Endothelial cell of umbilical vein (primary cell): ENCODE measurements at regions of chr20 and their contacts with region 1.

Region 1: DNA sequence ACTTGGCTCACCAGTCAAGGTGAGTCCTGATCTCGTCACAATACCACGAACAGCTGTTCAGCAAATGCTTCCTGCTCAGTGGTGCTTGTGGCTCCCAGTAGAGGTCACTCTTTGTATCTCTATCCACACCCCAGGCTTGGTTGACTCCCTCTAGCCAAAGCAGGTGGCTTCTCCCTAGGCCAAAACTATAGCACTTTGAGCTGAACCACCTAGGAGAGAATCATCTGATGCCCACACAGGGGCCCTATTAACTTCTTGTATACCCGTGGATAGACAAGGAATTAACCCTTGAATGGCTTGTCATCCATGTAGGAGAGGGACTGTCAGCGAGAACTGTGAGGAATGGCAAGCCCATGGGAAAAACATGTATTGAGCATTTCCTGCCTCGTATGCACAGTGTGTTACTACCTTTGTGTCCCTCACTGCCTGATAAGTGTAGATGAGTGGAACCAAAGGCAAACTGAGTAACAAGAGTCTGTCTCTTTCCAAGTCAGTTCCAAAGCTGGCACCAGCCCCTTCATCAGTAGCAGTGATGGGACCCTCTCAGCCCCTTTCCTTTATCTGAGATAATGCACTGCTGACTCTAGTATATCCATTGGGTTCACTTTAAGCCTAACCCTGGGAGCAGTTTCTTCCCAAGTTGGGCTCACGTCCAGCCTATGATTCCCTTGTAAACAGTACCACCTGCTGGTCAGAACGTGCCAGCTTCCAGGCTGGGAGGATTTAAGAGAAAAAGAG is 42.5 kb downstream of the EIF2S2 start:
- DNase-seq: peak; percentile 90
- H3K4me3 ChIP-seq: no peak overlapping the region
- H3K27ac ChIP-seq: no peak overlapping the region
- H3K4me1 ChIP-seq: no peaks in the 10 kb centered on the region
- H3K27me3 ChIP-seq: no peaks in the 10 kb centered on the region
- CTCF ChIP-seq: peak; percentile 64 to 93
- POLR2A ChIP-seq: no peak

Region 2: DNA sequence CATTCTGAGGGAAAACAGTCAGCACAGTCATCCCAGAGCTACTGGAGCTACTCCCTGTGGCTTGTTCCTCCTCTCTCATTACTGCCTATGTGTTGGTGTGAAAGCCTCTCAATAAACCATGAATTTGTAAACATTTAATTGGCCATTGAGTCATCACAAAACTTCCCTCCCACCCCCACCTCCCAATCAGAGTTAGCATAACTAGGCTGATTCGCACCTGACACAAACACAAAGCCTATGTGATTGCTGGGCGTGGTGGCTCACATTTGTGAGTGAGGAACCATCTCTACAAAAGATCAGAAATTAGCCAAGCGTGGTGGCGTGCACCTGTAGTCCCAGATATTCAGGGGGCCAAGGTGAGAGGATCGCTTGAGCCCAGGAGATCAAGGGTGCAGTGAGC is 608.8 kb before region 1 on chr20:
- CTCF ChIA-PET with region 1: no interaction called
- POLR2A ChIA-PET with region 1: no interaction called
- dilution Hi-C with region 1: no loop called
- intact Hi-C with region 1: loop called (anchors 5 kb)
- DNase-seq: no peak
- H3K4me3 ChIP-seq: no peak overlapping the region
- H3K27ac ChIP-seq: no peak overlapping the region
- H3K4me1 ChIP-seq: no peaks in the 10 kb centered on the region
- H3K27me3 ChIP-seq: no peaks in the 10 kb centered on the region
- CTCF ChIP-seq: no peak
- POLR2A ChIP-seq: no peak

Region 3: GRCh38 chr20:33947709-33948295 is 121.7 kb before region 1 on chr20:
- CTCF ChIA-PET with region 1: no interaction called
- POLR2A ChIA-PET with region 1: no interaction called
- dilution Hi-C with region 1: no loop called
- intact Hi-C with region 1: loop called (anchors 5 kb)
- DNase-seq: peak; percentile 24
- H3K4me3 ChIP-seq: no peak overlapping the region
- H3K27ac ChIP-seq: no peak overlapping the region
- H3K4me1 ChIP-seq: no peaks in the 10 kb centered on the region
- H3K27me3 ChIP-seq: peaks cover 2% of the 10 kb centered on the region in 2 experiments
- CTCF ChIP-seq: peak; percentile 52 to 70
- POLR2A ChIP-seq: no peak

Region 4: GRCh38 chr20:34129518-34130162 is 60.1 kb after region 1 on chr20:
- CTCF ChIA-PET with region 1: interaction called, 3 read pairs
- POLR2A ChIA-PET with region 1: no interaction called
- dilution Hi-C with region 1: no loop called
- intact Hi-C with region 1: loop called (anchors 1 kb)
- DNase-seq: peak; percentile 78
- H3K4me3 ChIP-seq: no peak overlapping the region
- H3K27ac ChIP-seq: no peak overlapping the region
- H3K4me1 ChIP-seq: peaks cover 3% of the 10 kb centered on the region
- H3K27me3 ChIP-seq: no peaks in the 10 kb centered on the region
- CTCF ChIP-seq: peak; percentile 61 to 76
- POLR2A ChIP-seq: no peak